Right lobe of liver (tissue), 6 donors: ENCODE measurements at regions of chr9 and their contacts with region 1.

Region 1: GRCh38 chr9:34500623-34501267 is 22.0 kb downstream of the ENHO start:
- DNase-seq: peak in 1 of 3 donors; percentile 64
- ATAC-seq: peak; percentile 78 to 92 (median 86)
- H3K4me3 ChIP-seq: no peak overlapping the region
- H3K27ac ChIP-seq: no peak overlapping the region
- H3K4me1 ChIP-seq: no peaks in the 10 kb centered on the region
- H3K27me3 ChIP-seq: no peaks in the 10 kb centered on the region
- CTCF ChIP-seq: peak; percentile 93 to 97 (median 94)
- POLR2A ChIP-seq: no peak

Region 2: DNA sequence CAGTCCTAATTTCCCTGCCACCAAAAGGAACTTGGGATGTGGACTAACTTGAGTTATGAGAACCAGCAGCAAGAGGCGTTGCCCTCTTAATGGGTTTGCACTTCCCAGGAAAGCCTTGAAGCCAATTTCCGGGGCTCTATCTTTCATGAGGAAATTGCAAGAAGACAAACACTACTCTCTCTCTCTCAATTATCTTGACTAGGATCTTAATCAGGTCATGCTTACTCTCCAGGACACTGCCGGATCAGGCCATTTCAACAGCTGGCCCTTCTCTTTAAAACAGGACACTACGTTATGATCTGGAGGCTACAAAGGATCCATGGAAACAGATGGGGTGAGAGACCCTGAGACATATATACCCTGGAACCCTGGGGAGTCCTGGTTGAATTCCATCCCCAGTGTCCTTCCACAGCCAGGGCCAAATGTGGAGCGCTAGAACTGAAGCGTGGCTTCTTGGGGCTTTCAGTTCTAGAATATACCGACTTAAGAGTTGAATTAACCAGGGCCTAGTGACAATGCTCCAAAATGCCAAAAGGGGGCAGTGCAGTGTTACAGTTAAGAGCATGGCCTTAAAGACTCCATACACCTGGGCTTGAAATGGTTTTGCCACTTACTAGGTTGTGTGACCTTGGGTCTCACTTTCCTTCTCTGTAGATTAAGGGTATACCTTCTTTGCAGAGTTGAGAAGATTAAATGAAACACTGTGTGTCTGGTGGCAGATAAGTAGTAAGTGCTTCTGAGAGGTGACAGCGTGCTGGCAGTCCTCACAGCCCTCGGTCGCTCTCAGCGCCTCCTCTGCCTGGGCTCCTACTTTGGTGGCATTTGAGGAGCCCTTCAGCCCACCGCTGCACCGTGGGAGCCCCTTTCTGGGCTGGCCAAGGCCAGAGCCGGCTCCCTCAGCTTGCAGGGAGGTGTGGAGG is 63.5 kb before region 1 on chr9:
- intact Hi-C with region 1: loop called (anchors 5 to 10 kb)
- DNase-seq: peak in 1 of 3 donors; percentile 52
- ATAC-seq: peak; percentile 89 to 93 (median 92)
- H3K4me3 ChIP-seq: no peak overlapping the region
- H3K27ac ChIP-seq: no peak overlapping the region
- H3K4me1 ChIP-seq: no peaks in the 10 kb centered on the region
- H3K27me3 ChIP-seq: no peaks in the 10 kb centered on the region
- CTCF ChIP-seq: peak; percentile 69 to 80 (median 74)
- POLR2A ChIP-seq: no peak

Region 3: GRCh38 chr9:34646211-34647083 is 145.7 kb after region 1 on chr9 and contains the start of gene GALT:
- intact Hi-C with region 1: no loop called
- DNase-seq: peak; percentile 95 to 98 (median 97)
- ATAC-seq: peak; percentile 65 to 78 (median 72)
- H3K4me3 ChIP-seq: peak within 1 kb of the TSS; percentile 64 to 95 (median 74)
- H3K27ac ChIP-seq: peak within 1 kb of the TSS; percentile 70 to 87 (median 83)
- H3K4me1 ChIP-seq: peaks cover 0 to 63% (median 24%) of the 10 kb centered on the region in 4 donors
- H3K27me3 ChIP-seq: no peaks in the 10 kb centered on the region
- CTCF ChIP-seq: peak; percentile 19 to 31 (median 22)
- POLR2A ChIP-seq: peak; percentile 73
- total RNA-seq, gene GALT: 58.2 to 157 (median 117) TPM